ENCODE measurements at regions of chr11 and their contacts with region 1.

Region 1: DNA sequence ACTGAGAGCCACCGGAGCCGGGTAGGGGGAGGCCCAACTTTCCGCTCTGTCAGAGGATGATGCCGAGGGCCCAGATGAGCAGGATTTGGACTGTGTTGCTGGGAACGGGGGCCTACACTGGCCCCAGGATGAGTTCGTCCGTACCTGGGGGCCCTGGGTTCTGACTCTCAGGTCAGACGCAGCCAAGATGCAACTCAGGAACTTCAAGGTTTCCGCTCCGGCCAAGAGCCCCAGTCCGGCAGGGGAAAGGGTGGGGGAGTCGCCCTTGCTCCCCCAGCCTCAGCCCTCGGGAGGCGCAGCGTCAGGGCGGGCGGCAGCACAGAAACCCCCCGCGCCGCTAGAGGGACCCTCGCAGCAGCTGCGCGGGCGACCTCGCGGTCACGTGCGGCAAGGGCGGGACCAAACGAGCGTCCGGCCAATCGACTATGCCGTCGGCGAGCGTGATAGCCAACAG is 241 bp upstream of the ARL2 start:
- H3K4me3 ChIP-seq: peak overlapping the region; percentile 77
- H3K27ac ChIP-seq: peak overlapping the region; percentile 86; the same call in 1 of the 2 replicates
- H3K4me1 ChIP-seq: no peaks in the 10 kb centered on the region
- CTCF ChIP-seq: peak; percentile 97

Region 2: DNA sequence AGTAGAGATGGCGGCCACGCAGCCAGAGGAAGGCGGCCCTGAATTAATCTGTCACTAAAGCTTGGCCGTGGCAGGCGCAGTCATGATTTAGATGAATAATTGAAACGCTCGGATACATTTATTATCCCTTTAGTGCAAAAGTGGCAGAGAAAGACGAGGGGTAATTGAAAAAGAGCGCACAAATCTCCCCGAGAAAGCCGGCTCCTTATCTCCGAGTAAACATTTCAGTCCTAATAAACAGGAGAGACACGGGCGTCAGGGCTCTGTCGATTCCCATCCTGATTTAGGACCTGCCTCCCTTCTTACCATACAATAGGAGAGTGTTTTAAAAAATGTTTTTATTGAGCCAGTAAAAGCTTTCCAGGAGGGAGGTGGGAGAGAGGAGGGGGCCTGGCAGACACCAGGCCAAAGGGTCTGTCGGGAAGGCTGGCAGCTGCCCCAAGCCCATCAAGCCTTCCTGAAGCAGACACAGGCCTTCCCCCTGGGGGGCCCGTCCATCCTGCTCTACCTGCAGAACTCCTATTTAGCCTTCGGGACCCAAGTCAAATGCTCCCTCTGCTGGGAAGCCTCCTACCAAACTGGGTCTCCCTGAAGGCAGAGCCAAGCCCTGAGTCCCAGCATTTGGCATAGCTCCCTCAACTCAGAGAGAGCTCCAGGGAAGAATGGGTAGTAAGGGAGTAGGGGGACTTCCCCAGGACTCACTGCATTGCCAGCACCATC is 1004.6 kb before region 1 on chr11:
- CTCF ChIA-PET with region 1: no interaction called
- POLR2A ChIA-PET with region 1: no interaction called
- H3K4me3 ChIP-seq: no peak overlapping the region
- H3K27ac ChIP-seq: no peak overlapping the region
- H3K4me1 ChIP-seq: no peaks in the 10 kb centered on the region
- CTCF ChIP-seq: no peak

Region 3: DNA sequence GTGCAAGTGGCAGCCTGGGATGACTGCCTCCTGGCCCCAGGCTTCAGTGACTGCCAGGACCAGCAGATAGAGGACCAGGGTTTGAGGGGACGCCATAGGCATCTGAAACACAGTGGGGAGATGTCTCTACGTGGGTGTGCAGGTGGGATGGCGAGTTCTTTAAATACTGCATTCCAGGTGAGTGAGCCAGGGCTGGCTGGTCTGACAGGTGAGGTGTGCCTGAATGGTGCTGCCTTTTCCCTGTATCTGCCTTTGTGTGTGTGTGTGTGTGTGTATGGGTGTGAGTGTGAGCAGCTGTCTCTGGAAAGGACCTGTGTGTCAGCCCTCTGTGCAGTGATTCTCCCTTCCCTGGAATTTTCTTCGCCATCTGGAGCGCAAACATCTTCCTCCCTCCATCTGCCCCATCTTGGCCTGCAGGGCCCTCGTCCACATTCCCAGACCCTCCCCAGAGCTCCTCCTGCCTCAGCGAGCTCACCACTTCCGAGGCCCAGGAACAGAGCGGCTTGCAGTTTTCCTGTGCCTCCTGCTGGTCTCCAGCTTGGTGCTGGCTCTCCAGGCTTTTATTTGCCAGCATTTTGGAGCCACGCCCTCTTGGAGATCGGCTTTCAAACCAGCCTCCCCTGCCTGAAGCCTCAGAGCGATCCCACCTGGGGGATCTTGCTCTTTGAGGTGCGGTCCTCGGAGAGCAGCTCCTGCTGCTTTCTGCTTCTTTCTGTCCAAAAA is 78.2 kb before region 1 on chr11 and contains the start of gene GPHA2:
- CTCF ChIA-PET with region 1: no interaction called
- POLR2A ChIA-PET with region 1: no interaction called
- H3K4me3 ChIP-seq: no peak within 1 kb of the TSS
- H3K27ac ChIP-seq: no peak within 1 kb of the TSS
- H3K4me1 ChIP-seq: no peaks in the 10 kb centered on the region
- CTCF ChIP-seq: no peak

Region 4: GRCh38 chr11:64996710-64997380 is 16.9 kb before region 1 on chr11 and contains the start of gene BATF2:
- CTCF ChIA-PET with region 1: interaction called, 15 read pairs
- POLR2A ChIA-PET with region 1: interaction called, 4 read pairs
- H3K4me3 ChIP-seq: no peak within 1 kb of the TSS
- H3K27ac ChIP-seq: no peak within 1 kb of the TSS
- H3K4me1 ChIP-seq: no peaks in the 10 kb centered on the region
- CTCF ChIP-seq: peak; percentile 89

Measured in HEK293 (cell line).